SK-N-SH (cell line): ENCODE measurements at regions of chr3 and their contacts with region 1.

Region 1: GRCh38 chr3:140470962-140471361 is 206.9 kb upstream of the TRIM42 start:
- DNase-seq: peak; percentile 17
- H3K4me3 ChIP-seq: no peak overlapping the region
- H3K27ac ChIP-seq: no peak overlapping the region; a peak in 1 of 4 replicates
- H3K4me1 ChIP-seq: peaks cover 0 to 3% of the 10 kb centered on the region in 2 experiments; a peak in 1 of 4 replicates
- H3K27me3 ChIP-seq: no peaks in the 10 kb centered on the region
- CTCF ChIP-seq: no peak
- EP300 ChIP-seq: no peak
- RAD21 ChIP-seq: no peak

Region 2: GRCh38 chr3:140459462-140459861 is 11.5 kb before region 1 on chr3:
- CTCF ChIA-PET with region 1: interaction called, 10 read pairs
- POLR2A ChIA-PET with region 1: no interaction called
- DNase-seq: no peak
- H3K4me3 ChIP-seq: no peak overlapping the region
- H3K27ac ChIP-seq: no peak overlapping the region
- H3K4me1 ChIP-seq: peaks cover 0 to 7% of the 10 kb centered on the region in 2 experiments; a peak in 1 of 4 replicates
- H3K27me3 ChIP-seq: no peaks in the 10 kb centered on the region
- CTCF ChIP-seq: no peak
- EP300 ChIP-seq: no peak
- RAD21 ChIP-seq: no peak